Activated T-helper 2 cell treated with anti-CD3 and anti-CD28 coated beads, Interferon-gamma antibody, Interleukin-2, Interleukin-4, amounts not matched to agents 10 μg/mL and 5 μg/mL and 100 μg/mL, durations not matched to agents 14 hours and 24 hours and 36 hours (primary cell): ENCODE measurements at regions of chr18 and their contacts with region 1.

Region 1: GRCh38 chr18:69727912-69728572 is 219.6 kb downstream of the CD226 start:
- DNase-seq: no peak
- H3K4me3 Mint-ChIP-seq: no peak overlapping the region
- H3K27ac Mint-ChIP-seq: no peak overlapping the region
- H3K4me1 Mint-ChIP-seq: no peaks in the 10 kb centered on the region
- H3K27me3 Mint-ChIP-seq: peaks cover 2% of the 10 kb centered on the region

Region 2: GRCh38 chr18:69414184-69414583 is 313.9 kb before region 1 on chr18:
- intact Hi-C with region 1: no loop called
- DNase-seq: no peak
- H3K4me3 Mint-ChIP-seq: no peak overlapping the region
- H3K27ac Mint-ChIP-seq: no peak overlapping the region
- H3K4me1 Mint-ChIP-seq: no peaks in the 10 kb centered on the region
- H3K27me3 Mint-ChIP-seq: no peaks in the 10 kb centered on the region

Region 3: DNA sequence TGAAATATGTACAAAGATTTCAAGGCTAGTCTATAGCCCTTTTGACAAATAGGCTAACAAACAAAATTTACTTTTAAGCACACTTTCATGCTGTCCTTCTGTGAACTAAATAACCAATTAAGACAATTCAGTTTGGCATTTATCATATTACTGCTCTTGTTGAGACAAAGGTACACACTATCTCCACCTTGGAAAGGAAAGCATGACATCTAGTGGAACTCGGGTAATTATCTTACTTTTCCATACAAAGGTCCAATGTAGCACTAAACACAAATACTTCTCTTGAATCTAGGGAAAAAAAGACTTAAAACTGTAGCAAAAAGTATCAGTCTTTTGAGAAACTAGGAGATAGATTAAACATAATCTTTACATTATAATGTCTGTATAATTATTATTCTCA is 344.6 kb after region 1 on chr18:
- intact Hi-C with region 1: loop called (anchors 10 kb)
- DNase-seq: no peak
- H3K4me3 Mint-ChIP-seq: no peak overlapping the region
- H3K27ac Mint-ChIP-seq: no peak overlapping the region
- H3K4me1 Mint-ChIP-seq: no peaks in the 10 kb centered on the region
- H3K27me3 Mint-ChIP-seq: no peaks in the 10 kb centered on the region